ENCODE measurements at regions of chr17 and their contacts with region 1.

Region 1: GRCh38 chr17:34892461-34893249 is 68.6 kb downstream of the CCT6B start:
- ATAC-seq: peak; percentile 90 to 94 (median 94)
- H3K4me3 ChIP-seq: no peak overlapping the region
- H3K27ac ChIP-seq: peak overlapping the region in 1 of 2 donors; percentile 24
- H3K4me1 ChIP-seq: peaks cover 29 to 33% of the 10 kb centered on the region in 2 donors

Region 2: GRCh38 chr17:34420254-34420766 is 472.3 kb before region 1 on chr17:
- in situ Hi-C with region 1: loop called in 4 of 9 experiments (anchors 25 kb)
- ATAC-seq: peak; percentile 59 to 81 (median 74)
- H3K4me3 ChIP-seq: no peak overlapping the region
- H3K27ac ChIP-seq: no peak overlapping the region
- H3K4me1 ChIP-seq: peaks cover 0 to 8% of the 10 kb centered on the region in 2 donors

Region 3: GRCh38 chr17:34474706-34475105 is 417.9 kb before region 1 on chr17:
- in situ Hi-C with region 1: loop called in 1 of 9 experiments (anchors 25 kb)
- ATAC-seq: no peak
- H3K4me3 ChIP-seq: no peak overlapping the region
- H3K27ac ChIP-seq: no peak overlapping the region
- H3K4me1 ChIP-seq: no peaks in the 10 kb centered on the region

Region 4: GRCh38 chr17:34584805-34585416 is 307.7 kb before region 1 on chr17:
- in situ Hi-C with region 1: loop called in 3 of 9 experiments (anchors 25 kb)
- ATAC-seq: peak; percentile 38 to 72 (median 48)
- H3K4me3 ChIP-seq: peak overlapping the region in 3 of 5 donors; percentile 3 to 15 (median 15)
- H3K27ac ChIP-seq: no peak overlapping the region
- H3K4me1 ChIP-seq: peaks cover 39 to 40% of the 10 kb centered on the region in 2 donors

Region 5: DNA sequence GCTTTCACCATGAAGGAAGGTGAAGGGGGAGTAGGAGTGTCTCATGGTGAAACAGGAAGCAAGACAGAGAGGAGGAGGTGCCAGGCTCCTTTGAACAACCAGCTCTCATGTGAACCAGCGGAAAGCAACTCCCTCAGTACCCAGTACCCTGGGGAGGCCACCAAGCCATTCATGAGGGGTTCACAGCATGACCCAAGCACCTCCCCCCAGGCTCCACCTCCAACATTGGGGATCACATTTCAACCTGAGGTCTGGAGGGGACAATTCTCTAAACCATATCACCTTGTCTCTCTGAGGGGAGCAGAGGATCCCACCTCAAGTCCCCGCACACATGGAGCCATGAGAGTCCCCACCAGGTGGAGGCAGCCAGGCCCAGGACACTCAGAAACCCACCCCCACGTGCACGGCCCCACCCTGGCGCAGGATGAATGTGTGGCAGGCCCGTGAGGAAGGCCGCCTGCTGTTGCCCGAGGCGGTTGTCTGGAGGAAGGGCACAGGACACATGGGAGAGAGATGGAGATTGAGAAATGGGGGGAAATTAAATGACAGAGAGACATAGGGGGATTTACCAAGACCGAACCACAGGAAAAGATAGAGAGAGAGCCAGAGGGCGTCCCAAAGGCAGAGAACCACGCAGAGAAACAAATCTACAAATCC is 227.4 kb before region 1 on chr17:
- in situ Hi-C with region 1: loop called in 1 of 9 experiments (anchors 25 kb)
- ATAC-seq: peak in 5 of 8 experiments; percentile 3 to 21 (median 6)
- H3K4me3 ChIP-seq: no peak overlapping the region
- H3K27ac ChIP-seq: peak overlapping the region in 1 of 2 donors; percentile 11
- H3K4me1 ChIP-seq: peaks cover 16 to 17% of the 10 kb centered on the region in 2 donors

Region 6: GRCh38 chr17:34980681-34981537 is 88.3 kb after region 1 on chr17:
- in situ Hi-C with region 1: loop called in 1 of 9 experiments (anchors 25 kb)
- ATAC-seq: peak; percentile 76 to 89 (median 84)
- H3K4me3 ChIP-seq: peak overlapping the region; percentile 77 to 96 (median 85)
- H3K27ac ChIP-seq: peak overlapping the region; percentile 97 to 98
- H3K4me1 ChIP-seq: peaks cover 9 to 11% of the 10 kb centered on the region in 2 donors